ENCODE measurements at regions of chr11 and their contacts with region 1.

Region 1: DNA sequence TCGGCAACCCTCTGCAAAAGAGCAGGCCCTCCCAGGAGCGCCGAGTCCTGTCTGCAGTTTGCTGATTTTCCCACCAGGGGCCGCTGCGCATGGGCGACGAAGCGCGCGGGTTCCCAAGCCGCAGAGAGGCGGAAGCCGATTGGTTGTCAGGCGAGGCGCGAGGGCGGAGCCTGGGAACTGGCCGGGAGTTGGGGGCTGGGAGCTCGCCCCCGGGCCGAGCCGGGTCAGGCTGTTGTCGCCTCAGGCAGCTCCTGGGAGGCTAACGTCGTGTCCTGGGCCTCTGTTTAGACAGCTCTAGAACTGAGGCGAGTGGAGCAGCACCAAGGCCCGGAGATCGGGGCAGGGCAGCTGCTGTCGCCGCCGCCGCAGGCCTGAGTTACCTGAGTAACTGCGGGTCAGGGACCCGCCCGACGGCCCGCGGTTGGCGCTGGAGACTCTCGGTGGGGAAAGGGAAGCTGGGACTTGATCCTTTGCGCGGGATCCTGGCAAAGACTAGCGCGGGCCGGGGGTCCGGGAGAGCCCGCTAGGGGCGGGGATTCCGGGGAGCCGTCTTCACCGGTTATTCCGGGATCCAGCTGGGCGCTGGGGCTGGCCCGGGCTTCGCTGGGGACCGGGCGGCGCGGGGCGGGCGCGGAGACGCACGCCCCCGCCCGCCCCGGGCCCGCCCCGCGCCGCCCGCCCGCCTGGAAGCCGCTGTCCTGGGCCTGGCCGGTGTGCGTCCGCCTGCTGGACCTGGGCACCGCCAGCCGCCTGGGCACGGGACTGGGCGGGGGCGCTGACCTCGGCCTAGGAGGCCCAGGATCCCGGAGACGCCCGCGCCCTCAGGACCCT is at the start of gene STIM1:
- DNase-seq: peak; percentile 94 to 99 (median 97)
- ATAC-seq: peak; percentile 89
- H3K4me3 ChIP-seq: peak within 1 kb of the TSS; percentile 87
- H3K4me3 Mint-ChIP-seq: peak within 1 kb of the TSS; percentile 86 to 98 (median 92)
- H3K27ac ChIP-seq: peak within 1 kb of the TSS; percentile 92
- H3K27ac Mint-ChIP-seq: peak within 1 kb of the TSS; percentile 93 to 100 (median 98)
- H3K4me1 ChIP-seq: peaks cover 49 to 57% of the 10 kb centered on the region in 2 donors
- H3K4me1 Mint-ChIP-seq: peaks cover 53 to 72% (median 61%) of the 10 kb centered on the region in 7 donors
- H3K27me3 ChIP-seq: no peaks in the 10 kb centered on the region
- H3K27me3 Mint-ChIP-seq: peaks cover 0 to 2% (median 0%) of the 10 kb centered on the region in 5 donors
- total RNA-seq, gene STIM1: 95.6 to 117 (median 103) TPM

Region 2: DNA sequence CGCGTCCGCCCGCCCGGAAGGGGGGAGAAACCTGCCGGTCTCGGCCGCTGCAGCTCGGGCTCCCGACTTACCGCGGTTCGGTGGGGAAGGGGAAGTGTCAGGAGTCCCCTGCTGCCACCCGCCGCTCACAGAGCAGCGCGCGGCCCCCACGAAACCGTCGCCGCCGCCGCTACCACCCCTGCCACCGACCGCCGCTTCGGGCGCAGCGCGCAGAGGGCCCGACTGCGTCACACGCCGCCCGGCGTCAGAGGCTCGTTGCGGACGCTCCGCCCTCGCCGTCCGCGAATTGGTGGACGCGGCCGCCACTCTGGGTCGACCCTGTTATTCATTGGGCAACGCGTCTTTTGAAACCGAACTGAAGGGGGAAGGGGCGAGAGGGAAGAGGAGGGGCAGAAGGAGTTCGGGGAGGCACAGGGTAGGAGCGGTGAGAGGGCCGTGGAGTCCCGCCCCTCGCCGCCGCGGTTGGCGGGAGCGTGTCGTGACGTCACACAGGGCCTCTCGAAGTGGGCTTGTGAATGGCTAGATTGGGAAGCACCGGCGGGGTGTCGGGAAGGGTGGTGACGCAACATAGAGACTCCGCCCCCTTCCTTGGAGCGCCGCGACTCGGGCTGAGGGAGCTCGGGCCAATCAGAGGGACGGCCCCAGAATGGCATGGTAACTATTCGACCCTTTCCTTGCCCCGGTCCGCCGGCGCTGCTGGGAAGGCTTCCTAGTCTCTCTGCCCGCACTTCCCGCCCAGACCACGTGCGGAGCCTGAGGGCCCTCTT is 57.7 kb before region 1 on chr11 and contains the start of gene NUP98:
- CTCF ChIA-PET with region 1: interaction called, 3 read pairs
- POLR2A ChIA-PET with region 1: interaction called, 9 read pairs
- intact Hi-C with region 1: loop called (anchors 1 kb)
- DNase-seq: peak; percentile 96 to 100 (median 100)
- ATAC-seq: peak; percentile 95
- H3K4me3 ChIP-seq: peak within 1 kb of the TSS; percentile 96
- H3K4me3 Mint-ChIP-seq: peak within 1 kb of the TSS; percentile 87 to 98 (median 96)
- H3K27ac ChIP-seq: peak within 1 kb of the TSS; percentile 99
- H3K27ac Mint-ChIP-seq: peak within 1 kb of the TSS; percentile 98 to 100 (median 99)
- H3K4me1 ChIP-seq: peaks cover 25 to 27% of the 10 kb centered on the region in 2 donors
- H3K4me1 Mint-ChIP-seq: peaks cover 11 to 61% (median 51%) of the 10 kb centered on the region in 7 donors
- H3K27me3 ChIP-seq: no peaks in the 10 kb centered on the region
- H3K27me3 Mint-ChIP-seq: peaks cover 0 to 2% (median 0%) of the 10 kb centered on the region in 5 donors
- total RNA-seq, gene NUP98: 103 to 137 (median 120) TPM

Region 3: DNA sequence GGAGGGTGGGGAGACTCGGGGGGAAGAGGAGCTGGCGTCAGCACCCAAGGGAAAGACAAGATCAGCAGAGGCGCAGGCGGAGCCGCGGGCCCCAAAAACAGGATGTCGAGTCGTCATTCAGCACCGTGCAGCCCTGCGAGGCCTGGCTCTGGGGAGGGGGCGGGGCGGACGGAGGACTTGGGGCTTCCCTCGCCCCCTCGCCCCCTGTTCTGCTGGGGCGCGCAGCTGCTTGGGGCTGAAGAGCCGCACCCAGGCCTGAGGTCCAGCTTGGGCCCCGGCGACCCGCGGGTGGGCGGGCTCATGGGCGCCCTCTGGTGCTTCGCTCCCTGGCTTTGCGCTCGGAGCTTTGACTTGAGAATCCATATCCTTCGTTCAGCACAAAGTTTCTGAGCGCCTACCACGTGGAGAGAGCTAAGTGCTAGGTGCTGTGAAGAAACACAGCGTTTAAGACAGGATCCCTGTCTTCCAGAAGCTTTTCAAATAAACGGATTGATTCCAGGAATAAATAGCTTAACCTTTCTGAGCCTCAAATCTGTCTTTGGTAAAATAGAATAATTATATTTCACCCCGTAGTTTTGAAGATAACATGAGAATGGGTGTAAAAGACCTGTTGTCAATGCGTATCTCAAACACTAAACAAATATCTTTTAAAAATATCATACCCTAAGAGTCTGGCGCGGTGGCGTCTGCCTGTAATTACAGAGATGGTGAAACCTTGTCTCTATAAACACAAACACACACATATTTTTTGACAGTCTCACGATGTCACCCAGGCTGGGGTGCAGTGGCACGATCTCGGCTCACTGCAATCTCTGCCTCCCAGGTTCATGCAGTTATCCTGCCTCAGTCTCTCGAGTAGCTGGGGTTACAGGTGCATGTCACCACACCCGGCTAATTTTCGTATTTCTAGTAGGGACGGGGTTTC is 13.5 kb before region 1 on chr11:
- CTCF ChIA-PET with region 1: interaction called, 213 read pairs
- POLR2A ChIA-PET with region 1: interaction called, 399 read pairs
- intact Hi-C with region 1: loop called (anchors 1 kb)
- DNase-seq: peak; percentile 82 to 98 (median 95)
- ATAC-seq: peak; percentile 84
- H3K4me3 ChIP-seq: peak overlapping the region; percentile 51
- H3K4me3 Mint-ChIP-seq: peak overlapping the region; percentile 76 to 99 (median 91)
- H3K27ac ChIP-seq: peak overlapping the region; percentile 95
- H3K27ac Mint-ChIP-seq: peak overlapping the region; percentile 87 to 99 (median 97)
- H3K4me1 ChIP-seq: peaks cover 30 to 34% of the 10 kb centered on the region in 2 donors
- H3K4me1 Mint-ChIP-seq: peaks cover 19 to 64% (median 54%) of the 10 kb centered on the region in 7 donors
- H3K27me3 ChIP-seq: no peaks in the 10 kb centered on the region
- H3K27me3 Mint-ChIP-seq: no peaks in the 10 kb centered on the region

Region 4: GRCh38 chr11:3905080-3905953 is 50.1 kb after region 1 on chr11:
- CTCF ChIA-PET with region 1: interaction called, 8 read pairs
- POLR2A ChIA-PET with region 1: interaction called, 37 read pairs
- intact Hi-C with region 1: loop called (anchors 1 to 2 kb)
- DNase-seq: peak in 8 of 9 donors; percentile 45 to 80 (median 72)
- ATAC-seq: peak; percentile 92
- H3K4me3 ChIP-seq: no peak overlapping the region
- H3K4me3 Mint-ChIP-seq: peak overlapping the region; percentile 9 to 72 (median 54)
- H3K27ac ChIP-seq: peak overlapping the region; percentile 59
- H3K27ac Mint-ChIP-seq: peak overlapping the region; percentile 64 to 91 (median 81)
- H3K4me1 ChIP-seq: peaks cover 41 to 57% of the 10 kb centered on the region in 2 donors
- H3K4me1 Mint-ChIP-seq: peaks cover 66 to 93% (median 84%) of the 10 kb centered on the region in 7 donors
- H3K27me3 ChIP-seq: no peaks in the 10 kb centered on the region
- H3K27me3 Mint-ChIP-seq: no peaks in the 10 kb centered on the region

Region 5: GRCh38 chr11:3947061-3947460 is 91.9 kb after region 1 on chr11:
- CTCF ChIA-PET with region 1: interaction called, 30 read pairs
- POLR2A ChIA-PET with region 1: interaction called, 86 read pairs
- intact Hi-C with region 1: loop called (anchors 1 kb)
- DNase-seq: peak in 8 of 9 donors; percentile 36 to 86 (median 80)
- ATAC-seq: peak; percentile 88
- H3K4me3 ChIP-seq: peak overlapping the region; percentile 44
- H3K4me3 Mint-ChIP-seq: peak overlapping the region; percentile 52 to 88 (median 80)
- H3K27ac ChIP-seq: peak overlapping the region; percentile 65
- H3K27ac Mint-ChIP-seq: peak overlapping the region; percentile 93 to 99 (median 97)
- H3K4me1 ChIP-seq: peaks cover 93 to 95% of the 10 kb centered on the region in 2 donors
- H3K4me1 Mint-ChIP-seq: peaks cover 84 to 98% (median 97%) of the 10 kb centered on the region in 7 donors
- H3K27me3 ChIP-seq: no peaks in the 10 kb centered on the region
- H3K27me3 Mint-ChIP-seq: no peaks in the 10 kb centered on the region

Region 6: GRCh38 chr11:4065601-4066377 is 210.6 kb after region 1 on chr11:
- CTCF ChIA-PET with region 1: interaction called, 164 read pairs
- POLR2A ChIA-PET with region 1: interaction called, 110 read pairs
- intact Hi-C with region 1: no loop called
- DNase-seq: no peak
- ATAC-seq: no peak
- H3K4me3 ChIP-seq: no peak overlapping the region
- H3K4me3 Mint-ChIP-seq: peak overlapping the region in 2 of 10 donors; percentile 2 to 35
- H3K27ac ChIP-seq: peak overlapping the region; percentile 15
- H3K27ac Mint-ChIP-seq: peak overlapping the region in 8 of 9 donors; percentile 55 to 86 (median 72)
- H3K4me1 ChIP-seq: peaks cover 26 to 47% of the 10 kb centered on the region in 2 donors
- H3K4me1 Mint-ChIP-seq: peaks cover 49 to 70% (median 69%) of the 10 kb centered on the region in 7 donors
- H3K27me3 ChIP-seq: no peaks in the 10 kb centered on the region
- H3K27me3 Mint-ChIP-seq: no peaks in the 10 kb centered on the region